Activated CD4-positive, alpha-beta T cell treated with anti-CD3 and anti-CD28 coated beads for 36 hours (primary cell): ENCODE measurements at regions of chr4 and their contacts with region 1.

Region 1: GRCh38 chr4:176150356-176150682 is 45.1 kb downstream of the SPATA4 start:
- DNase-seq: no peak
- ATAC-seq: no peak
- H3K4me3 Mint-ChIP-seq: no peak overlapping the region
- H3K27ac Mint-ChIP-seq: no peak overlapping the region
- H3K4me1 Mint-ChIP-seq: no peaks in the 10 kb centered on the region
- H3K27me3 Mint-ChIP-seq: no peaks in the 10 kb centered on the region

Region 2: GRCh38 chr4:175427761-175428160 is 722.6 kb before region 1 on chr4:
- CTCF ChIA-PET with region 1: no interaction called
- POLR2A ChIA-PET with region 1: no interaction called
- intact Hi-C with region 1: no loop called
- DNase-seq: no peak
- ATAC-seq: no peak
- H3K4me3 Mint-ChIP-seq: no peak overlapping the region
- H3K27ac Mint-ChIP-seq: no peak overlapping the region
- H3K4me1 Mint-ChIP-seq: no peaks in the 10 kb centered on the region
- H3K27me3 Mint-ChIP-seq: no peaks in the 10 kb centered on the region

Region 3: DNA sequence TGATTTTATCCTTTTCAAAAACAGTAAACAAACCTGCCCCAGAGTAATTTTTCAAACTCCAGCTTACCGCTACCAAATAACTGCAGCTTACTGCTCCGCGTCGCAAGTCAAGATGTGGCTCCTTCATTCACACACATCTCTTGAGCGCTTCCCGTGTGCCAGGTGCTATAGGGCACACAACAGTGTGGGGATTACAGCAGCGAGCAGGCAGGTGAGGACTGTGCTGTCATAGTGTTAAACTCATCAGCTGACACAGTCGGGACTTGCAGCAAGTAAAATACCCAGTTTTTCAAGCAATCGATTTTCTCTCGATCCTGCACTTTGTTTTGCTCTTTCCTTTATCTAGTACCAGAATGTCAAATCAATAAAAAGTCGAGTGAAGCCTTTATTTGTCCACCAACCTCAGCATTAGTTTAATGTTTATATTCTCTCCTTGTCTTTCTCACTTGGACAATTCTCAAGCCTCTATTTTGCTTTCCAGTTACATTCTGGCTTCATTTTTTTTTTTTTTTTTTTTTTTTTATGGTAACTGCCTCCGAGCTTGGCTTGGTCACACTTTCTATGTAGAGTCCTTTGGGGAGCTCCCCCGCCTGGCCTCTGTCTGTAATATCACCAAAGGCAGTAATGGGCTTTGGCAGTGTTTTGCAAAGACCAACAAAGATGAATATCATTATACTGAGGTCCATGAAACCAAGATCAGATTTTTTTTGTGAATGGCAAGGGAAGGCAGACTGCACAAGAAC is 127.0 kb after region 1 on chr4:
- CTCF ChIA-PET with region 1: interaction called, 3 read pairs
- POLR2A ChIA-PET with region 1: no interaction called
- intact Hi-C with region 1: loop called in 1 of 2 experiments (anchors 1 kb)
- DNase-seq: peak; percentile 46
- ATAC-seq: peak; percentile 55
- H3K4me3 Mint-ChIP-seq: no peak overlapping the region
- H3K27ac Mint-ChIP-seq: no peak overlapping the region
- H3K4me1 Mint-ChIP-seq: no peaks in the 10 kb centered on the region
- H3K27me3 Mint-ChIP-seq: peaks cover 24% of the 10 kb centered on the region